ENCODE measurements at regions of chr11 and their contacts with region 1.

Region 1: DNA sequence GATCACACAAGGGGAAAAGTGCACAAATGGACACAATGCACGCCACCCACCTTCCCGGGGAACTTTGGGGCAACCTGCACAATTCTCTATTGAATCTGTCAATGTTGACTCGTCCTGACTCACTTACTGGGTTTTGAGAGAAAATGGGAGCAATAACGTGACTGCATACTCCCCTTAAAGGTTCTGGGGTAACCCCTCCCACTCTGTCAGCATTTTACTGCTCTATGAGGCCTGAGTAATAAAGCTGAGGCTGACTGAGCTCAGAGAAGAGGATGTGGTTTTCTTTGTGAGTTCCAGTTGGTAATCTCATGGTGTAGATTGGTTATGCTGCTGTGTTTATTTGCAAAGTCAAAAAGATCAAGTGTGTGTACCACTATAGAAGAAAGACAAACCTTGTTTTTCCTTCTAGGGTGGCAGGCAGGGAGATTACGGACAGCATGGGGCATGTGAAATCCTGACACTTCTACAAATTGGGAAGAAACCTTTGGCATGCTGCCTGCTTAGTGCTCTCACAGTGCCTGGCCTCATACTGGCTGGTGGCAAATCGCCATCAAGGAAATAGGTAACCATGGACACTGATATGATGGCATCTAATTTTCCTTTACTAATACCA is 16.1 kb upstream of the APOA1 start:
- DNase-seq: peak; percentile 80
- H3K4me3 Mint-ChIP-seq: peak overlapping the region; percentile 7
- H3K27ac Mint-ChIP-seq: peak overlapping the region; percentile 88
- H3K4me1 Mint-ChIP-seq: peaks cover 59% of the 10 kb centered on the region
- H3K27me3 Mint-ChIP-seq: no peaks in the 10 kb centered on the region

Region 2: DNA sequence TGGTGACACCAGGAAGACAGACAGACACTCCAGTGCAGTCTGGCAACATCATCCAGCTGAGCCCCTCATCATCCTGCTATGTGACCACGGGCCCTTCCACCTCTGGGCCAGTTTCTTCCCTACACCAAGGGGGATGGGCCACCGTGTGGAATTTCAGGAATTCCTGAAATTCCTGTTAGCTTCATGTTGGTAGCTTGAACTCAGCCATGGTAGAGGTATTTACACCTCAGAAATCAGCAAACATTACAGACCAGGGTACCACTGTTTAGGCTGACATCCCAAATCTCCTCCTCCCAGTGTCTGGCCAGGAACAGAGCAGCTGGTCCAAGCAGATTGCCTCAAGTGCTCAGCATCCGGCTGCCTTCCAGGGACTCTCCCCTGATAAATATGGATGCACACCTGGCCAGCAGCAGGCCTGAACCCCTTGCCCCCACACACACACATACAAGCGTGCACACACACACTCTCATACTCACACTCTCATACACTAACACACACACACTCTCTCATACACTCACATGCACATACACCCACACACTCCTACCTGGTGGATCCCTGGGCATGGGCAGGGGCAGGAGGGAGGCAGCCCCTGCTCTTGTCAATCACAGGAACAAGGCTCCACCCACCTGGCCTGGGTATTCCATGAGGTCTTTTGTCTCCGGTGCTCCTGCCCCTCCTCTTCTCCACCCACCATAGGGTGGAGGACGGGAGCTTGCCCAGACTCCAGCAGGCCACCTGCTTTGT is 165.9 kb before region 1 on chr11:
- CTCF ChIA-PET with region 1: no interaction called
- intact Hi-C with region 1: no loop called
- DNase-seq: no peak
- H3K4me3 Mint-ChIP-seq: no peak overlapping the region
- H3K27ac Mint-ChIP-seq: no peak overlapping the region
- H3K4me1 Mint-ChIP-seq: peaks cover 2% of the 10 kb centered on the region
- H3K27me3 Mint-ChIP-seq: peaks cover 5% of the 10 kb centered on the region

Region 3: DNA sequence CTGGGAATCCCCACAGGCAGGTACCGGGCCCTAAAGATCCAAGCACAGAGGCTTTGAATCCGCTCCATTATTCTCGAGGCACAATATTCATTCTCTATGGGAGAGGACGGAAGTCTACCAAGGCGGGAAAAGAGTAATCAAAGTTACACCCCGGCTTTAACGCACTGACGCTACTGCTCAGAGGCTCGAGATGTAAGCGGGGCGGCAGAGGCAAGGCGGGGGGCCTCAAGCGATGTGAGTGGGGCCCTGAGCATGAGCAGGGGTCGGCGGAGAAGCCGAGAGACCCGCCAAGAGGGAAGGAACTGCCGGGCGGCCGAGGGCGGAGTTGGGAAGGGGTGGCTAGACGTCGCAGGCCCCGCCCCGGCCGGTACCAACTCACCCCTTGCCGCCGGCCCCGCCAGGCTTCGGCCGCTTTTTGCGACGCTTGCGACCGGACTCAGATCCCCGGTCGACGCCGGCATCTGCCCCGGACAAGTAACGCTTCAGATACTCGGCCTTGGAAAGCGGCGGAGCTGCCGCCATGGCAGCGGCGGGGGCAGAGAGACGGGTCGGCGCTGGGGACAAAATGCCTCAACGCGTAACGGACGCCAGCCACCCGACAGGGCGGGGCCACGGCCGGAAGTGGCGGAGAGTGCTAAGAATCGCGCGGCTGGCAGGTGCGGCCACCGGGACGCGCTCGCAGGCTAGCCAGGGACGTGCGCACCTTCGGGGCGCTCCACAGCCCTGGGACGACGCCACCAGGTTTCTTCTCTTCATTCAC is 80.9 kb before region 1 on chr11 and contains the start of gene BUD13:
- CTCF ChIA-PET with region 1: interaction called, 4 read pairs
- intact Hi-C with region 1: loop called (anchors 1 kb)
- DNase-seq: peak; percentile 96
- H3K4me3 Mint-ChIP-seq: peak within 1 kb of the TSS; percentile 99
- H3K27ac Mint-ChIP-seq: peak within 1 kb of the TSS; percentile 97
- H3K4me1 Mint-ChIP-seq: peaks cover 48% of the 10 kb centered on the region
- H3K27me3 Mint-ChIP-seq: no peaks in the 10 kb centered on the region
- total RNA-seq, gene BUD13: 35.0 to 37.7 TPM

Region 4: GRCh38 chr11:116879800-116880625 is 26.4 kb after region 1 on chr11:
- CTCF ChIA-PET with region 1: no interaction called
- intact Hi-C with region 1: loop called (anchors 1 kb)
- DNase-seq: peak; percentile 33
- H3K4me3 Mint-ChIP-seq: no peak overlapping the region
- H3K27ac Mint-ChIP-seq: no peak overlapping the region
- H3K4me1 Mint-ChIP-seq: peaks cover 23% of the 10 kb centered on the region
- H3K27me3 Mint-ChIP-seq: no peaks in the 10 kb centered on the region

Region 5: GRCh38 chr11:116986521-116987105 is 133.0 kb after region 1 on chr11:
- CTCF ChIA-PET with region 1: no interaction called
- intact Hi-C with region 1: loop called (anchors 1 kb)
- DNase-seq: peak; percentile 50
- H3K4me3 Mint-ChIP-seq: peak overlapping the region; percentile 48
- H3K27ac Mint-ChIP-seq: peak overlapping the region; percentile 85
- H3K4me1 Mint-ChIP-seq: peaks cover 74% of the 10 kb centered on the region
- H3K27me3 Mint-ChIP-seq: no peaks in the 10 kb centered on the region

Region 6: GRCh38 chr11:117072517-117073461 is 219.2 kb after region 1 on chr11:
- CTCF ChIA-PET with region 1: no interaction called
- intact Hi-C with region 1: loop called (anchors 2 kb)
- DNase-seq: no peak
- H3K4me3 Mint-ChIP-seq: no peak overlapping the region
- H3K27ac Mint-ChIP-seq: peak overlapping the region; percentile 30
- H3K4me1 Mint-ChIP-seq: peaks cover 63% of the 10 kb centered on the region
- H3K27me3 Mint-ChIP-seq: no peaks in the 10 kb centered on the region

Region 7: DNA sequence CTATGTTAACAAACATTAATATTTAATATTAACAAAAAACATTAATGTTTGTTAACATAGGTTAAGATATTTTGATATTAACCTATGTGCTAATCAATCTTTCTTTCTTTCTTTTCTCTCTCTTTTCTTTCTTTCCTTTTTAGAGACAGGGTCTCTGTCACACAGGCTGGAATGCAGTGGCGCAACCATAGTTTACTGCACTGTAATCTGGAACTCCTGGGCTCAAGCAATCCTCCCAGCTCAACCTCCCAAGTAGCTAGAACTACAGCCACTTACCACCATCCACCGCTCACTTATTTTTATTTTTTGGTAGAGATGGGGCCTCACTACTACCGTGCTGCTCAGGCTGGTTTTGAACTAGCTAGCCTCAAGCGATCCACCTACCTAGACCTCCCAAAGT is 231.4 kb after region 1 on chr11:
- CTCF ChIA-PET with region 1: no interaction called
- intact Hi-C with region 1: no loop called
- DNase-seq: no peak
- H3K4me3 Mint-ChIP-seq: no peak overlapping the region
- H3K27ac Mint-ChIP-seq: no peak overlapping the region
- H3K4me1 Mint-ChIP-seq: peaks cover 57% of the 10 kb centered on the region
- H3K27me3 Mint-ChIP-seq: no peaks in the 10 kb centered on the region

Region 8: DNA sequence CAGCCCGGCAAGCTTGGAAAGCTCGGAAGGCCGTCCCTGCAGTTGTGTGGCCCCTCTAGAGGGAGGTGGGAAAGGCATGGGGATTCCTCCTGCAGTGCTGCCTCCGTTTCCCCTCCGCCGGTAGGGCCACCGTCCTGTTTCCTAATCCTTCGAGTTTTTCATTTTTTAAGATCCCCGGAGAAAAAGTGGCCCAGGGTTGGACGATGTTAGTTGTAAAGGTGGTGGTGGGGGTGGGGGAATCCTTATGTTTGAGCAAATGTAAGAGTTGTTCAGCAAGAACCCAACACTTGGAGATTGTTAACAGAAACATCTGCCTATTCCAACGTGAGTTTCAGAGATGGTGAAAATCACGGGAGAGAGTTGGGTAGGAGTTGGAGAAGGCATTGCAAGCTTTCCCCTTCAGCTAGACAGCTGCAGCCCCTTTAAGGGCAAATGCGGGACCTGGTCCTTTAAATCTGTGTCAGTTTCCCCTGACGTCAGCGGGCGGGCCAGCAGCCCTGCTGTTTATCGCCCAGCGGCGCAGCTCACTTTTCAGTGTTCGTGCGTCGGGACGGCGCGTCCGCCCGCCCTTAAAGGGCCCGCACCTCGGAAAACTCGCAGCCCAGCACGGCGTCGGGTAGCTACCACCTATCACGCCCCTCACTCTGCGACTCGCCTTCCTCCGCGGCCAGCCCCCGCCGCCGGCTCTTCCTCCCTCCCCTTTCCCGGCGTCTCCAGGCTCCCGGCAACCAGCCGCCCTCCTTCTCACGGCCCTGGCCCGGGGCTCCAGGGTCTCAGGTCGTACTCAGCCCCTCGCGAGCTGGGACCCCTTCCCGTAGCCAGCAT is 324.9 kb after region 1 on chr11 and contains the start of gene SIDT2:
- CTCF ChIA-PET with region 1: interaction called, 3 read pairs
- intact Hi-C with region 1: loop called (anchors 1 kb)
- DNase-seq: peak; percentile 92
- H3K4me3 Mint-ChIP-seq: peak within 1 kb of the TSS; percentile 93
- H3K27ac Mint-ChIP-seq: peak within 1 kb of the TSS; percentile 79
- H3K4me1 Mint-ChIP-seq: peaks cover 28% of the 10 kb centered on the region
- H3K27me3 Mint-ChIP-seq: no peaks in the 10 kb centered on the region
- total RNA-seq, gene SIDT2: 23.9 to 25.6 TPM

Region 9: DNA sequence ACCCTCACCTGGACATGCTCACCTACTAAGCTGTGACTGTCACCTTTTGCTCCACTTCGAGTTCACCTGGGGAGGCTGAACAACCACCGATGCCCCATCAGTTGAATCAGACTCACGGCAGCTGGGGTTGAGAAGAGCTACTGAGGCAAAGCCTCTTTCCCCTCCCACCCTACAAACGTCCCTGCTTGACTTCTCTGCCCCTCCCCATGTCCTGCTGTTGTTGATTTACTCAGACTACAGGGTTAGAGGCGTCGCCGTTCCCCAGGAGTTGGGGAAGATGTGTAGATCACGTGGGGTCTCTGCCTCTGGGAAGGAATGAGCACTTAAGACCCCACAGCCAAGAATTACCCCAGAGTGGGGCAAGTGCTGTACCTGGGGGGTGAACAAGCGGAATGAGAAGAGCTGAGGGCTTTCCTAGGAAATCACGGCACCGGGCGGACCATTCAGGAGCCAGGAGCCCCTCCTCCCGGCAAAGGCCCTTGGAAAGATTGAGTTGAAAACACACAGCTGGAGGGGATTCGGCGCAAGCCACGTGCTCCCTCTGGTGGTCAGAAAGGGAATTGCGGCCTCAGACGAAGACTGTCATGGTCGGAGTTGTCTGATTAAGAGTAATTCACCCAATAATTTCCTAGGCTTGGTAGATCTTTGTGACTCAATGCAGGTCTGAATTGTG is 963.9 kb after region 1 on chr11:
- CTCF ChIA-PET with region 1: no interaction called
- intact Hi-C with region 1: loop called (anchors 5 kb)
- DNase-seq: peak; percentile 98
- H3K4me3 Mint-ChIP-seq: peak overlapping the region; percentile 56
- H3K27ac Mint-ChIP-seq: peak overlapping the region; percentile 95
- H3K4me1 Mint-ChIP-seq: peaks cover 65% of the 10 kb centered on the region
- H3K27me3 Mint-ChIP-seq: no peaks in the 10 kb centered on the region